Mammary epithelial cell (primary cell): ENCODE measurements at regions of chr14 and their contacts with region 1.

Region 1: DNA sequence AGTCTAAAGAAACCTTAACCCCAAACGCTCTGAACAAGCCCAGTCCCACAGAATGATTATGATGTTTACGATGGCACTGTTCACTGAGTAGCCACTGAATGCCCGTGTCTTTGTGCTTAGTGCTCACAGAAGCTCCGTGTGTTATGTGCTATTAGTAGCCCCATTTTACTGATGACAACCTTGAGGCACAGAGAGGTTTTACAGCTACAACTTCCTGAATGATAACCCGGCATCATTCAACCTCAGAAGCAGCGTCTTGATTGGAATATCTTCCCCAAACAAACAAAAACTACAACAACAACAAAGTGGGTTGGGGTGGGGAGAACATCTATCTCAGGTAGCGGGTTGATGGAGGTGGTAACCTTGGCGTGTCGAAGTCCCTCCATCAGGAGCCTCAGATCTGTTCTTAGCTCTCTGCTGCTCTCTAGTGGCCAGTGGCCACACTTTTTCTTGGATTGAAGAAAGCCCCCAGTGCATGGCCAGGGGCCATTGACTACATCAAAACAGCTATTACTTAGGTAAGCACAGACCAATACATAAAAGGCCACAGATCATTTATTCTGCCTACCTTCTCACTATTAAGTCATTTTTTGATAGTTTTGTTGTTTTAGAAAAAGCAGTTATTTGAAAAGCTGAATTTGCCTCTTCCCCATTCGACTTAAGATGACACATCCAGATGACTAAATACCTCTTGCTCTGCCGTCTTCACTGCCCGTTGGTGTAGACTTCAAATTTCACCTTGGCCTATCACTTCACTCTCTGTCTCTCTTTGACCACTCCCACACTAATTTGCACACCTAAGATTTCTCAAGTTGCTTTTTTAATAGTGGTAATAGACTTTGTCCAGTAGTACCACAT is 376.9 kb downstream of the GALC start:
- DNase-seq: peak; percentile 37
- H3K4me3 ChIP-seq: no peak overlapping the region
- H3K27ac ChIP-seq: no peak overlapping the region
- H3K4me1 ChIP-seq: no peaks in the 10 kb centered on the region
- H3K27me3 ChIP-seq: no peaks in the 10 kb centered on the region
- CTCF ChIP-seq: peak; percentile 75 to 87

Region 2: DNA sequence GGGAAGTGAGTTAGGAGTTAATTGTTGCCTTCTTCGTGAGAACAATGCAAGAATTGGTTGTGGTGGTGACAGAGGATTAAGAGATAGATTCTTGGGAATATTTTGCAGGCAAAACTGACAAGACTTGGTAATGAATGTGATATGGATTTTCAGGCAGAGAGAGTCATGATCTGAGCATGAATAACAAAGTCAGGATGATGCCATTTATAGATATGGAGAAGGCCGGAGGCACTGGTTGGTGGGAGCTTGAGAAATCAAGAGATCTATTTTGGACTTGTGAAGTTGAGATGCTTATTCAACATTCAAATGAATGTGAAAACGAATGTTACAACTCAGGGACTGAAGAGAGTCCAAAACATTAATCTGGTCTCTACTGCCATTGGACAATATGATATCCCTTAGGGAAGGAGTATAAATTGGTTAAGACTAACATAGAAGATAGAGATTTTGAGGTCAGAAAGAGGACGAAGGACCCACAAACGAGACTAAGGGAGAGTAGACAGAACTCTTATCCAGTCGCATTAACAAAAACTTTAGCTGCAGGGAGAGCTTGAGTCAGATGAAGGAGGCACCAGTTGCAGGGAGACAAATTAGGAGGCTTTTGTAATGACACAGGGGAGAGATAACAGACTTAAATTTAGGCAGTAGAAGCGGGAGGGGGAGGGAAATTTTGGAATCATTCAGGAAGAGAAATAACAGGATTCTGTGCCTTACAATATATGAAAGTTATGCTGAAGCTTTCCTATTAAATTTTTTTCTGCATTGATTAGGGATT is 713.7 kb before region 1 on chr14:
- CTCF ChIA-PET with region 1: no interaction called
- dilution Hi-C with region 1: no loop called
- in situ Hi-C with region 1: no loop called
- intact Hi-C with region 1: loop called (anchors 5 kb)
- DNase-seq: no peak
- H3K4me3 ChIP-seq: no peak overlapping the region
- H3K27ac ChIP-seq: no peak overlapping the region
- H3K4me1 ChIP-seq: no peaks in the 10 kb centered on the region
- H3K27me3 ChIP-seq: no peaks in the 10 kb centered on the region
- CTCF ChIP-seq: no peak

Region 3: GRCh38 chr14:87066221-87066817 is 549.7 kb before region 1 on chr14:
- CTCF ChIA-PET with region 1: no interaction called
- dilution Hi-C with region 1: no loop called
- in situ Hi-C with region 1: no loop called
- intact Hi-C with region 1: loop called (anchors 5 kb)
- DNase-seq: peak; percentile 27
- H3K4me3 ChIP-seq: no peak overlapping the region
- H3K27ac ChIP-seq: no peak overlapping the region
- H3K4me1 ChIP-seq: no peaks in the 10 kb centered on the region
- H3K27me3 ChIP-seq: no peaks in the 10 kb centered on the region
- CTCF ChIP-seq: peak; percentile 61 to 72

Region 4: GRCh38 chr14:87334997-87335685 is 280.9 kb before region 1 on chr14:
- CTCF ChIA-PET with region 1: no interaction called
- dilution Hi-C with region 1: no loop called
- in situ Hi-C with region 1: no loop called
- intact Hi-C with region 1: loop called (anchors 2 kb)
- DNase-seq: peak; percentile 8
- H3K4me3 ChIP-seq: peak overlapping the region in 2 of 3 experiments; percentile 0 to 27
- H3K27ac ChIP-seq: no peak overlapping the region
- H3K4me1 ChIP-seq: no peaks in the 10 kb centered on the region
- H3K27me3 ChIP-seq: no peaks in the 10 kb centered on the region
- CTCF ChIP-seq: peak; percentile 47 to 48

Region 5: DNA sequence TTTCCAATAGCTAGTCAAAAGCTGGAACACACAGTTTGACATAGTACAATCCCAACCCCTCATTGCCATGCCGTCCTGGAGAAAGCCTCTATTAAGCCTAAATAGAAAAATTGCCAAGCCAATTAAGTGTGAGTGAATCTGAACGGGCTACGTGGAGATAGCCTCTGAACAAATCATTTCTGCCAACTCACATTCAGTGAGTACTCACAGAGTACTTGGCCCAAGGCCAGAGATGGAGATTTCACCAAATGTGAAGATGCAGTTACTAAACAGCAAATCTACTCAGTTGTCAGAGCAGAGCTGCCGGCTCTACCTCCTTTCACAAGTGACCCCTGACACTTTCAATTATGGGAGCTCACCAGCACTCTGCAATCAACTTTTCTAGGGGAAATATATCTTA is 27.0 kb after region 1 on chr14:
- CTCF ChIA-PET with region 1: no interaction called
- dilution Hi-C with region 1: no loop called
- in situ Hi-C with region 1: no loop called
- intact Hi-C with region 1: no loop called
- DNase-seq: peak; percentile 5
- H3K4me3 ChIP-seq: no peak overlapping the region
- H3K27ac ChIP-seq: no peak overlapping the region
- H3K4me1 ChIP-seq: no peaks in the 10 kb centered on the region
- H3K27me3 ChIP-seq: no peaks in the 10 kb centered on the region
- CTCF ChIP-seq: no peak

Region 6: DNA sequence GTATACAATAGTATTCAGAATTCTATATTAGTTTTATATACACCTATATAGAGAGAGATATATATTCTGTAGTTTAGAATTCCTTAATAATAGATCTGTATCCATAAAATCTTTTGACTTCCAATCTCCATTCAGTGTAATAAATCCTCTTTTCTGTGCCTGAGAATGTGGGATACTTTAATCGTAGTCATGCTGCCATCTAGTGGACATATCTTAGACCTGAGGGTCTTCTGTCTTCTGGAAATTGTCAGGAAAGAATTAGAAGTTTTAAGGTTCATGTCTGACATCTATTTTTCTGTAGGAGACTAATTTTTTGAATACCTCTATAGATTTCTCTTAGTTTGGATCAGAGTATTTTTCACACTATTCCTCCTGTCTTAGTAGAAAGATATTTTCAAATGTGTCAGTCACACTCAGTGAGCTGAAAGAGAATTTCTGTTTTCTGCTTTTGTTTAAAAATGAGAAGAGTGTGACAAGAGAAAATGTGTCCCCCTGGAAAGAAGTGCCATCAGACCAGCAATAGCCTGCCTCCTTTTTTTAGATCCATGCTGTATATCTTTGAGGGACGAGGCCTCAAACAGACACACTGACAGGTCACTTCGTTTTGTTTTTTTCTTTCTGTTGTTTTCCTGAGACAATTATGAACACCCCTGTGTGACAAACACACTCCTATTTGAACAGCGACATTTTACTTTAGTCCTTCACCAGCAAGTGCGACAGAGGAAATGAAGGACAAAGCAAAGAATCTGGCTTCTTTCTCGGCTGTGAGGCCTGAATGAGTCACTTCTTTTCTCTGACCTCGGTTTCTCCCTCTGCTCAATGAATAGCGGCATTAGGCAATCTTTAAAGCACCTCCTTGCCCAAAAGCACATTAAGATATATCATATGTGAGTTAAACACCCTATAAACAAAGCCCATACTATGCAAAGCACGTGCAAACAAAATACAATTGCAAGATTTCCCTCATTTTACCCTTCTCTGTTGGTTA is 280.6 kb after region 1 on chr14:
- CTCF ChIA-PET with region 1: no interaction called
- dilution Hi-C with region 1: no loop called
- in situ Hi-C with region 1: no loop called
- intact Hi-C with region 1: loop called (anchors 2 kb)
- DNase-seq: peak; percentile 37
- H3K4me3 ChIP-seq: no peak overlapping the region
- H3K27ac ChIP-seq: no peak overlapping the region
- H3K4me1 ChIP-seq: no peaks in the 10 kb centered on the region
- H3K27me3 ChIP-seq: no peaks in the 10 kb centered on the region
- CTCF ChIP-seq: peak; percentile 68 to 69